ENCODE measurements at regions of chr16 and their contacts with region 1.

Region 1: DNA sequence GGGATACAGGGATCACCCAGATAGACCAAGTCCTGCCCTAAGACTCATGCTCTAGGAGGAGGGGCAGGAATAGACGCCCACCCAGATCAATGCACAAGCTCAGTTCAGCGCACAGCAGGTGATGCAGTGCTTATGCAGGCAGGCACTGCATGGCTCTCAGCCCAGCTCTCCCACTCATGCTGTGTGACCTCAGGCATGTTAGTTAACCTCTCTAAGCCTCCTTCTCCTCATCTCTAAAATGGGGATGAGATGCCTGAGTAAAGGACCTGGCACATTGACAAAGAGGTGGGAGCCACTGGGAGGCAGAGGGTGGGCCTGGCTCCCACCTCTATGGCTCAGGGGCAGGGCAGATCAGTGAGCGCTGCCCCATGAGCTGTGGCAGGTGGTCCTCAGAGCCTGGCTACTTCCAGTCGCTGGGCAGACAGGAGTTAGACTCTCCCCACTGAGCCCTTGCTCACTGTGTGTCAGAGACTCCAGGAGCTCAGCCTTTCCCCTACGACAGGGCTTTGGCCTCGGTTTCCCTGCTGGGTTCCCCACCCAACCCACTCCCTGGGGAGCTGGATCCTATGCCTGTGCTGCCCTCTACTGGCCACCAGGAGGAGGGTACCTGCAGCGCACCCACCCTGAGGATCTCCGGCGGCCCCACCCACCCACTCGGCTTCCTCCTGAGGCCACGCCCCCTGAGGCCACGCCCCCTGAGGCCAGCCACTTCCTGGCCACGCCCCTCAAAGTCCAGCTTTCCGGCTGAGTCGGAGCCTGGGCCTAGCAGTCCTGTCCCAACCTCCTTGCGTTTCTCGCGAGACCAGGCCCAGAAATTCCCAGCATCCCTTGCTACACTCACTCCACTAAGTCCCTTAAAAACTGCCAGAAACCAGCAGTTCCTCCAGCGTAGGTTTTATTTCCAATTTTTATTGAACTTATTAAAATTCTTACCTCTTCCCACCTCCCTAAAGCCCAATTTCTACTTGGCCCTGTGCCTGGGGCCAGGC is 196.1 kb downstream of the GSG1L start:
- DNase-seq: no peak
- ATAC-seq: peak; percentile 94
- H3K4me3 ChIP-seq: no peak overlapping the region
- H3K27ac ChIP-seq: no peak overlapping the region
- H3K4me1 ChIP-seq: no peaks in the 10 kb centered on the region
- H3K27me3 ChIP-seq: peaks cover 3% of the 10 kb centered on the region; the same call in 1 of the 2 replicates
- CTCF ChIP-seq: peak; percentile 82

Region 2: DNA sequence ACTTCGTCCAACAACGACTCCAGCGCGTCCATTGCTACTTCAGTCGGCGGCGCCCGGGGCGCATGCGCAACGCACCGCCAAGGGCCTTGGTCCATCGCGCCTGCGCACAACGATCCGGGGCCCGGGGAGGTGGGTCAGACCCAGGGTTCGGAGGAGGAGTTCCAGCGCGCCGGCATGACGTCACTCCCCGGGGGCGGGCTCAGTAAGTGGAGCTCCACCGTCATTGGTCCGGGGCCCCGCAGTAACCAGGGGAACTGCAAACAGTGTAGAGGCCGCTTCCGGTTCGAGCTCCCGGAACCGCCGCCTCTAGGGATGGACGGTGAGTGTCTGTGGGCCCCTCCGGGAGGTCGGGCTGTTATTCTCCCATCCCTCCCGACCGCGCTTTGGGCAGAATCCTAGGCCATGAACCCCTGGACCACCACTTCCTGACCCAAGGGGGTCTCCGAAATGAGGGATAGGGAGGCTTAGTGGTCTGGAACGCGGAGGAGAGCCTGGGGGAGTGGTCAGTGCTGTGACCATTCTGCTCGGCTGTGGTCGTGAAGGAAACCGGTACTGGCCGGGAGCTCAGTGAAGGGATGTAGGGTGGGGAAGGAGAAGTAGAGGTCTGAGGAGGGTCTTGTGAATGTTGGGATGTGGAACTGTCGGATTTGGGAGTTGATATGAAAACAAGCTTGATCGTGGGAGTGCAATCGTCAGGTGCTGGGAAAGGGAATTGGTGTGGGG is 317.4 kb before region 1 on chr16 and contains the starts of genes GTF3C1 and KATNIP:
- CTCF ChIA-PET with region 1: interaction called, 10 read pairs
- POLR2A ChIA-PET with region 1: no interaction called
- in situ Hi-C with region 1: no loop called
- intact Hi-C with region 1: no loop called
- DNase-seq: peak; percentile 92
- ATAC-seq: peak; percentile 99
- H3K4me3 ChIP-seq: peak within 1 kb of the TSS; percentile 90 to 100
- H3K27ac ChIP-seq: peak within 1 kb of the TSS; percentile 87
- H3K4me1 ChIP-seq: peaks cover 17% of the 10 kb centered on the region
- H3K27me3 ChIP-seq: no peaks in the 10 kb centered on the region
- CTCF ChIP-seq: no peak
- total RNA-seq, gene GTF3C1: 121 TPM
- total RNA-seq, gene KATNIP: 36.7 TPM

Region 3: GRCh38 chr16:27611340-27611739 is 256.1 kb before region 1 on chr16:
- CTCF ChIA-PET with region 1: interaction called, 10 read pairs
- POLR2A ChIA-PET with region 1: no interaction called
- in situ Hi-C with region 1: no loop called
- intact Hi-C with region 1: no loop called
- DNase-seq: no peak
- ATAC-seq: no peak
- H3K4me3 ChIP-seq: no peak overlapping the region
- H3K27ac ChIP-seq: no peak overlapping the region
- H3K4me1 ChIP-seq: no peaks in the 10 kb centered on the region
- H3K27me3 ChIP-seq: no peaks in the 10 kb centered on the region
- CTCF ChIP-seq: no peak

Region 4: DNA sequence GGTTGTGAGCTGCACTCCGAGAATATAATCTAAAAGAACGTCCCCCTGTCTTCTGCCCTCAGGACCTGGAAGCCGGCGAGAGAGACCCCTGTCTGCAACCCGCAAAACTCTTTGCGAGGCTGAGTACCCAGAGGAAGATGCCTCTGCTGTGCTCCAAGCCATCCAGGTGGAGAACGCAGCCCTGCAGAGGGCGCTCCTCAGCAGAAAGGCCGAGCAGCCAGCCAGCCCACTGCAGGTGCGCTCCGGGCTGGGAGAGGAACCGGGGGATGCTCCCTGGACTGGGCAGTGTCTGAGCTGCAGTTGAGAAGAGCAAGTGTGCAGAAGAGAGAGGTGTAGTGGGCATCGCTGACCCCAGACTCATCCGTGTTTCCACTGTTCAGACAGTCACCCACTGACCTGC is 169.2 kb before region 1 on chr16:
- CTCF ChIA-PET with region 1: no interaction called
- POLR2A ChIA-PET with region 1: no interaction called
- in situ Hi-C with region 1: no loop called
- intact Hi-C with region 1: loop called (anchors 5 kb)
- DNase-seq: no peak
- ATAC-seq: no peak
- H3K4me3 ChIP-seq: no peak overlapping the region
- H3K27ac ChIP-seq: no peak overlapping the region
- H3K4me1 ChIP-seq: no peaks in the 10 kb centered on the region
- H3K27me3 ChIP-seq: no peaks in the 10 kb centered on the region
- CTCF ChIP-seq: peak; percentile 74; the same call in 1 of the 2 replicates

Region 5: DNA sequence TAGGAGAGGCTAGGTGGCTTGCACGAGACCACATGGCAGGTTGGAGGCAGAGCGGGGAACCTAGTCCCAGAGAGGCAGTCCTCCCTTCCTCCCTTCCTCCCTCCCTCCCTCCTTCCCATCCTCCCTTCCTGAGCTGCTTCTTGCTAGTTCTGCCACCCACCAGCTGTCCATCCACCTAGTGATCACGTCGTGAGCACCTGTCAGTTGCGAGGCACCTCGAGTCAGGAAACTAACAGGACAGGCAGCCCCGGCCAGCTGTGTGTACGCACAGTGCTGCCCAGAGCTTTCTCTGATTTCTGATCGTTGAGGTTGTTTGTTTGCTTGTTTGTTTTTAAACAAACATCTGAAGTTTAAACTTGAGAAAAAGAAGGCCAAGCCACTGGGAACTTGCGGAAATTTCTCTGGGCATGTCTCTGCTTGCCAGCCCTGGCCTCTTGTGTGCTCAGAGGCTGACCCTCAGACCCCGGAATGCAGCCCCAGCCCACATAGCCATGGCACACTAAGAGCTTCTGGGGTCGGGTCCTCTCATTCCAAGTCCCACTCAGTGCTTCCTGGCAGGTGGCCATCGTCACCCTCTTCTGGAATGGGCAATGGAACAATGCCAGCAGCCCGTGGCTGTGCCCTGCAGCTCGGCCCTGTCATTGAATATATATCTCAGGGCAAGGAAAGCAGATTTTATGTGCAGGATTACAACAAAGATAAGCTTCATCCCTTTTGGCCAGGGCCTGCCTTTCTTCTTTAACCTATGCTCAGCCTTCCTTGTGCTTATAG is 143.5 kb before region 1 on chr16:
- CTCF ChIA-PET with region 1: interaction called, 19 read pairs
- POLR2A ChIA-PET with region 1: no interaction called
- in situ Hi-C with region 1: no loop called
- intact Hi-C with region 1: no loop called
- DNase-seq: no peak
- ATAC-seq: no peak
- H3K4me3 ChIP-seq: no peak overlapping the region
- H3K27ac ChIP-seq: no peak overlapping the region
- H3K4me1 ChIP-seq: peaks cover 7% of the 10 kb centered on the region; the same call in 1 of the 2 replicates
- H3K27me3 ChIP-seq: no peaks in the 10 kb centered on the region
- CTCF ChIP-seq: no peak

Region 6: DNA sequence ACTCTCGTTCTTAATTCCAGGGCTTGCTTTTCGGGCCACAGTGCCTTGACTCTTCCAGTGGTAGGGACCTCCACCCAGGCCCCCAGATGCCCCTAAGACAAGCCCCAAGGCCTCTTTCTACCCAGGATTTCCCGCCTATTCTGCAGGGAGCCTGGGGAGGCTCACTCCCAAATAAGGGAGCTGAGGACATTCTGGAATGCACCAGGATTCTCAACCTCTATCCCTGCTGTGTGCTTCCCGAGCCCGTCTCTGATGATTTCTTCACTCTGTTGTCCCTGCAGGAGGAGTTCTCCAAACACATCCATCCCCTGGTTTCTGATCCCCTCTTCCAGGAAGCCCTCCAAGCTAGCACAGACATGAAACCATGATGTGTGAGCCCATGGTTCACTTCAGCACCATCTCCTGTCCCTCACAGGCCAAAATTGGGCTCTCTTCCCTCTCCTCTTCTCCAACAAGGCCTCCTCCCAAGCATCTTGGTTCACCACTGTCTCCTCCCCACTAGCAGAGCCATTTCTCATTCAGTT is 61.5 kb before region 1 on chr16:
- CTCF ChIA-PET with region 1: interaction called, 10 read pairs
- POLR2A ChIA-PET with region 1: no interaction called
- in situ Hi-C with region 1: no loop called
- intact Hi-C with region 1: no loop called
- DNase-seq: no peak
- ATAC-seq: 0 out of 2 replicates have a peak, but pooled peaks have one; percentile 26
- H3K4me3 ChIP-seq: no peak overlapping the region
- H3K27ac ChIP-seq: no peak overlapping the region
- H3K4me1 ChIP-seq: no peaks in the 10 kb centered on the region
- H3K27me3 ChIP-seq: peaks cover 4% of the 10 kb centered on the region
- CTCF ChIP-seq: no peak

Region 7: DNA sequence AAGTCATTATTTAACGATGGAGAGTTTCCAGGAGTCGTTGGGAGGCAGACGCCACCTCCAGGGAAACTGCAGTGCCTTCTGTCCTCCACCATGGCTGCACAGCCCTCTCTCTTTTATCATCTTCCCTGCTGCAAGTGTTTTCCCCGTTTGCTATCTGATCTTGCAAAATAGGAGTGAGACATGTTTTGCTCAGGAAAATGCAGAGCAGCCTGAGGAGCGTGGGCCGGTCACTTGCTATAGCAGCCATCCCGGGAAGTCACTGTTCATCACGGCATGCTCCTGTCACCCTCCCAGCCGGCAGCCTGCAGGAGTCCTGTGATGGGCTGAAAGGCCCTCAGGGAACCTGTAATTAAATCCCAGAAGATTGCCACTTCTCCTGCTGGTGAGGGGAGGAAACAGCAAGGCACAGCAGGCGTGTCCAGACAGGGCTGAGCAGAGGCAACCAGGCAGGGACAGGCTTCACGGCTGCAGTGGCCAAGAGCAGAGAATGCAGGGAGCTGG is 53.0 kb after region 1 on chr16:
- CTCF ChIA-PET with region 1: no interaction called
- POLR2A ChIA-PET with region 1: interaction called, 15 read pairs
- in situ Hi-C with region 1: no loop called
- intact Hi-C with region 1: no loop called
- DNase-seq: no peak
- ATAC-seq: peak; percentile 86
- H3K4me3 ChIP-seq: no peak overlapping the region
- H3K27ac ChIP-seq: no peak overlapping the region
- H3K4me1 ChIP-seq: 0 out of 2 replicates have a peak, but pooled peaks cover 3% of the 10 kb centered on the region
- H3K27me3 ChIP-seq: 0 out of 2 replicates have a peak, but pooled peaks cover 11% of the 10 kb centered on the region
- CTCF ChIP-seq: 0 out of 2 replicates have a peak, but pooled peaks have one; percentile 40